BJ (cell line): ENCODE measurements at regions of chr2 and their contacts with region 1.

Region 1: DNA sequence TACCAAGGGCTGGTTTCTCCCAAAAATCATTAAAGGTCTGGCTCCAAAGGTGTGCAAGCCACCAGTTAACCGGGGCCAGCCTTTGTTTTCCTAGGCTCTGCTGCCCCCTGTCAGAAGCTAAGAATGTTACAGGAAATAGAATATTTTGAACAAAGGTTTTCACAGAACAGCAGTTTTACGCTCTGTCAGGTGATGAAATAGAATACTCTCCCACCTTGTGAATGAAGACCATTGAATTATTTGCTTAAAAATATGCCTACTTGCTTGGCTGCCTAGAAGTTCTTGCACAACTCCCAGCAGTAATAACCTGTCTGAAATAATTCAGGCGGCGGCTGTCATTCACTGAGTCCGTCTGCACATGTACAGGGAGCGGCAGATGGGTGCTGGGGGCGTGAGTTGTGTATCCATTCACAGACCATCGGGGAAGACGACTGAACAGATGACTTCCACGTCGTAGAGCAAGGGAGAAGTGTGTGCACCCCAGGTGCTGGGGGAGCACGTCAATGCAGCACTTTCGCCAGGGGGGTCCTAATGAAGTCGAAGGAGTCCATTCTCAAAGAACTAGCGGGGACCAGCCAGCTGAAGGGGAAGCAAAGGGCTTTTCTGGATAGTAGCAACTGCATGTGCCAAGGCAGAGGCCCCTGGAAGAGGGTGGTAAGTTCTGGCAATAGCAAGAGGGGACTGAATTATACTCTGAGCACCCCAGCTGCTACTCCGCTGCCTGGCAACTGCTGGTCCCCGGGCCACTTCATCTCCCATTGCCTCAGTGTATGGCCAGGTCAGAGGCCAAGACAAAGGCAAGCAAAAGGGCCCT is 56.1 kb downstream of the SF3B1 start:
- DNase-seq: no peak
- H3K4me3 ChIP-seq: no peak overlapping the region
- H3K27me3 ChIP-seq: no peaks in the 10 kb centered on the region; the same call in 1 of the 2 replicates
- CTCF ChIP-seq: peak; percentile 72

Region 2: GRCh38 chr2:197131558-197131855 is 247.2 kb before region 1 on chr2:
- CTCF ChIA-PET with region 1: no interaction called
- POLR2A ChIA-PET with region 1: no interaction called
- DNase-seq: no peak
- H3K4me3 ChIP-seq: no peak overlapping the region
- H3K27me3 ChIP-seq: no peaks in the 10 kb centered on the region
- CTCF ChIP-seq: no peak

Region 3: GRCh38 chr2:197191177-197191939 is 187.3 kb before region 1 on chr2:
- CTCF ChIA-PET with region 1: interaction called, 12 read pairs
- POLR2A ChIA-PET with region 1: no interaction called
- DNase-seq: no peak
- H3K4me3 ChIP-seq: no peak overlapping the region
- H3K27me3 ChIP-seq: no peaks in the 10 kb centered on the region
- CTCF ChIP-seq: peak; percentile 59

Region 4: DNA sequence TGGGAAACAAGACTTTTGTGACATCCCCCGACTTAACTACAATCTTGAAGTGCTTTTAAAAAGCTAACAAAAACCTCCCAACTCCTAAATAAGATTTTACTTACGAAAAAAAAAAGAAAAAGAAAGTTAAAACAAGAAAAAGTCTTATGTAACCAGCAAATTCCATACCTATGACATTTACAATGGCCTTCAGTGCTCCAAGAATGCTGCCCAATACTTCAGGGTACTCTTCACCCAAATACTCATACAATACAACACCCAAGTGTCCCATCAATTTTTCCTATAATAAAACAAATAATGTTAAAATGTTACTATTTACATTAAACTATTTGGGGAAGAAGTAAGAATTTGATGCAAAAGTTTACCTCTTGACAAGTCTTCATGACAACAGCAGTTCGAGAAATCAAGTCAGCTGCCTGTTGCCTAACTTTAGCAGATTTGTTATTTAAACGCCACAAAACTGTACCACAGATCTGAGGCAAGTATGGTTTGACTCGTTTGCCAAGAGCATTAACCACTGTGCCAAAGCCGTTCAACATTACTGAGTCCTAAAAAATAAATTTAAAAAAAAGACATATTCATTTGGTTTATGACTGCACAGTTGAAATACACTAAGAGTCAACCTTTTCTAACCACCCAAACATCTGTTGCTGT is 21.3 kb after region 1 on chr2:
- CTCF ChIA-PET with region 1: no interaction called
- POLR2A ChIA-PET with region 1: no interaction called
- DNase-seq: no peak
- H3K4me3 ChIP-seq: no peak overlapping the region
- H3K27me3 ChIP-seq: no peaks in the 10 kb centered on the region
- CTCF ChIP-seq: no peak

Region 5: GRCh38 chr2:197416268-197416667 is 37.6 kb after region 1 on chr2:
- CTCF ChIA-PET with region 1: no interaction called
- POLR2A ChIA-PET with region 1: no interaction called
- DNase-seq: no peak
- H3K4me3 ChIP-seq: no peak overlapping the region
- H3K27me3 ChIP-seq: no peaks in the 10 kb centered on the region
- CTCF ChIP-seq: no peak

Region 6: GRCh38 chr2:197599285-197599965 is 220.7 kb after region 1 on chr2:
- CTCF ChIA-PET with region 1: no interaction called
- POLR2A ChIA-PET with region 1: no interaction called
- DNase-seq: no peak
- H3K4me3 ChIP-seq: no peak overlapping the region
- H3K27me3 ChIP-seq: no peaks in the 10 kb centered on the region
- CTCF ChIP-seq: peak; percentile 37